ENCODE measurements at regions of chr12 and their contacts with region 1.

Region 1: GRCh38 chr12:46364777-46365580 is 7.6 kb downstream of the SLC38A2 start:
- DNase-seq: peak in 1 of 2 donors; percentile 71
- ATAC-seq: peak in 5 of 8 donors; percentile 28 to 83 (median 42)
- H3K4me3 ChIP-seq: peak overlapping the region in 4 of 10 donors; percentile 0 to 7 (median 4)
- H3K27ac ChIP-seq: peak overlapping the region in 7 of 10 donors; percentile 22 to 60 (median 48)
- H3K4me1 ChIP-seq: peaks cover 14 to 100% (median 76%) of the 10 kb centered on the region in 9 donors
- H3K27me3 ChIP-seq: no peaks in the 10 kb centered on the region
- CTCF ChIP-seq: no peak

Region 2: DNA sequence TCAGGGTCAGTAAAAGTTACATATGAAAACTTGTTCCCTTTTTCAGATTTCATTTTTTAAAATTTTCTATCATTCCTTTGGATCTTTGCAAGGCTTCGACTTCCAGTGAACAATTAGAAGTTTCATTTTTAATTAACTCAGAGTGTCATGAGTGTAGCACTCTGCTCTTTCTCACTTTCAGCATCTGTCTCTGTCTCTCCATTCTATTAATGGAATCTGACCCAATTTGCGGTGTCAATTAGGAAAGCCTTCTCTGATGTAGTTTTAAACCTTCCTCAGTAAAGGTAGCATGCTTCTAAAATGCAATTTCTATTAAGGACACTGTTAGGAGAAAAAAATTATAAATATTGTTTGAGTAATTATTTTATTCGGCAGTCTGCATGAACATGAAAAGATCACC is 164.4 kb before region 1 on chr12:
- intact Hi-C with region 1: loop called in 1 of 10 experiments (anchors 5 kb)
- DNase-seq: no peak
- ATAC-seq: peak in 3 of 8 donors; percentile 23 to 62 (median 50)
- H3K4me3 ChIP-seq: no peak overlapping the region
- H3K27ac ChIP-seq: no peak overlapping the region
- H3K4me1 ChIP-seq: peaks cover 0 to 11% (median 2%) of the 10 kb centered on the region in 9 donors
- H3K27me3 ChIP-seq: no peaks in the 10 kb centered on the region
- CTCF ChIP-seq: no peak

Region 3: GRCh38 chr12:46415552-46415951 is 50.6 kb after region 1 on chr12:
- intact Hi-C with region 1: no loop called
- DNase-seq: no peak
- ATAC-seq: peak in 3 of 8 donors; percentile 55 to 67 (median 55)
- H3K4me3 ChIP-seq: no peak overlapping the region
- H3K27ac ChIP-seq: no peak overlapping the region
- H3K4me1 ChIP-seq: peaks cover 0 to 32% (median 8%) of the 10 kb centered on the region in 9 donors
- H3K27me3 ChIP-seq: no peaks in the 10 kb centered on the region
- CTCF ChIP-seq: no peak

Region 4: DNA sequence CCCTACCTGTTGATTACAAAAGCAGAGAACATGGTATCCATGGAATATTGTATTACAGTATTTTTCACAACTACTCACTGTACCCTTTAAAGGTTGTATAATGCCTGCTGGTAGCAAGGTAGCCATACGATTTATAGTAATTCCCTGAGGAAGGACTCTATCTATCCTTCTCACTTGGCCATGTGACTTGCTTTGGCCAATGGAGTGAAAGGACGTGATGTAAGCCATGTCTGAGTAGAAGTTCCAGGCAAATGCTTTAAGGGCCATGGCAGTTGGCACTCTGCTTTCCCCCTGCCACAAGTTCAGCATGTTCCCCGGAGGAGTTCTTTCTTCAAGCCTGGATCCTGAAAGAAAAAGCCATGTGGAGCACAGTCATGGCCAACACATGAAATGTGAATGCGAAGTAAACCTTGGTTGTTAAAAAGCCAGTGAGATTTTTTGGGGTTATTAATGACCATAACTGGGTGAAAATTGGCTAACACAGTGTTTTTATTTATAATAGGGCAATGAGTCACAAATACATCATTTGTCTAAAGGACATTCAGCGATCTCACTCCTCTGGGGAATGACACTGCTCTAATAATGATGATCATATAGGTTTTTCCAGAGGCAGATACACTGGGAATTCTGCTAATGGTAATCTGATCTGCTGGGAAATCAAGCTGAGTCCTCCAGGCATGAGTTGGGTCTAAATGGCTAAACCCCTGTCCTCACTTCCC is 75.0 kb after region 1 on chr12:
- intact Hi-C with region 1: no loop called
- DNase-seq: no peak
- ATAC-seq: no peak
- H3K4me3 ChIP-seq: no peak overlapping the region
- H3K27ac ChIP-seq: no peak overlapping the region
- H3K4me1 ChIP-seq: peaks cover 0 to 3% (median under 1%) of the 10 kb centered on the region in 9 donors
- H3K27me3 ChIP-seq: no peaks in the 10 kb centered on the region
- CTCF ChIP-seq: no peak